Heart right ventricle (tissue), 16 donors: ENCODE measurements at regions of chr2 and their contacts with region 1.

Region 1: GRCh38 chr2:34387536-34387935 is 788.4 kb upstream of the FAM98A start:
- DNase-seq: no peak
- ATAC-seq: no peak
- H3K4me3 ChIP-seq: no peak overlapping the region
- H3K27ac ChIP-seq: no peak overlapping the region
- H3K4me1 ChIP-seq: no peaks in the 10 kb centered on the region
- H3K27me3 ChIP-seq: peaks cover 0 to 5% (median 0%) of the 10 kb centered on the region in 7 donors
- CTCF ChIP-seq: no peak

Region 2: GRCh38 chr2:34423301-34423700 is 35.8 kb after region 1 on chr2:
- intact Hi-C with region 1: loop called in 1 of 10 experiments (anchors 2 kb)
- DNase-seq: no peak
- ATAC-seq: no peak
- H3K4me3 ChIP-seq: no peak overlapping the region
- H3K27ac ChIP-seq: no peak overlapping the region
- H3K4me1 ChIP-seq: no peaks in the 10 kb centered on the region
- H3K27me3 ChIP-seq: no peaks in the 10 kb centered on the region
- CTCF ChIP-seq: no peak

Region 3: GRCh38 chr2:34799556-34799955 is 412.0 kb after region 1 on chr2:
- intact Hi-C with region 1: no loop called
- DNase-seq: no peak
- ATAC-seq: no peak
- H3K4me3 ChIP-seq: no peak overlapping the region
- H3K27ac ChIP-seq: no peak overlapping the region
- H3K4me1 ChIP-seq: no peaks in the 10 kb centered on the region
- H3K27me3 ChIP-seq: no peaks in the 10 kb centered on the region
- CTCF ChIP-seq: no peak